Lower leg skin (tissue), 4 donors: ENCODE measurements at regions of chr2 and their contacts with region 1.

Region 1: GRCh38 chr2:72993147-72993932 is 76.0 kb downstream of the EMX1 start:
- DNase-seq: peak; percentile 36 to 81
- H3K4me3 ChIP-seq: no peak overlapping the region
- CTCF ChIP-seq: peak in 1 of 3 donors; percentile 54
- POLR2A ChIP-seq: no peak

Region 2: GRCh38 chr2:73035899-73036711 is 42.8 kb after region 1 on chr2:
- intact Hi-C with region 1: no loop called
- DNase-seq: no peak
- H3K4me3 ChIP-seq: no peak overlapping the region
- CTCF ChIP-seq: no peak
- POLR2A ChIP-seq: no peak

Region 3: DNA sequence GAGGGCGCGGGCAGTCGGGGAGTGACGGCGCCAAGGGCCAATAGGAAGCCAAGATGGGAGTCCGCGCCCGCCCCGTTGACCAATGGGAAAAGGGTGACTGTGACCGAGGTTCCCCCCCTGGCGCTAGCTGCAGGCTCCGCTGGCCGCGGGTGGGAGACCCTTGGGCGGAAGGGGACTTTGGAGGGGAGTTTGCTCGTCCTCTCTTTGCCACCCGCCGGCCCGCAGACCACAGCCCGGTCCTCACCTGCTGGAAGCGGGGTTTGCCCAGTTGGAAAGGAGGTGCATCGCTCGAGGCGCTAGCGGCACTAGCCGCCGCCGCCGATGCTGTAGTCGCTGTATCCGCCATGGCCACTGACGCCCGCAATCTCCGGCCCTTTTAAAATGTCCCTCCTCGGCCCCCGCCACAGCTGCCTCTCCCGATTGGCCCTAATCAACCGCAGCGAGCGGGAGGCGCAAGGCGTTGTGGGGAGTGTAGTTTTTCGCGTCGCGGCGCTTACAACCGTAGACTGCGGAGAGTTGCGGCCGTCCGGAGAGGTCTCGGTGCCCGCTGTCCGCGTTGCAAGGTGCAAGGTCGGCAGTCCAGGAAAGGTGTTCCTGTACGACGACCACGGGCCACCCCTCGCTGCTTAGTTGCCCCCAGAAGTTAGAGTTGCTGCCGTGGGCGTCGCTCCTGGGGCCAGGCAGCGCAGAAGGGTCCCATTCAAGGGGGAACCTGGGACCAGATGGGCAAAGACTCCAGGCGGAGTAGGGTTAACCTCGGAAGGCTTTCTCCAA is 78.2 kb after region 1 on chr2 and contains the start of gene SFXN5:
- intact Hi-C with region 1: loop called (anchors 10 kb)
- DNase-seq: peak; percentile 97 to 100
- H3K4me3 ChIP-seq: peak within 1 kb of the TSS; percentile 82
- CTCF ChIP-seq: peak in 1 of 3 donors; percentile 42
- POLR2A ChIP-seq: no peak
- total RNA-seq, gene SFXN5: 8.4 to 18.3 (median 15.3) TPM